A549 (cell line): ENCODE measurements at regions of chr6 and their contacts with region 1.

Region 1: GRCh38 chr6:12289933-12290820 is at the start of gene EDN1:
- DNase-seq: peak; percentile 70 to 93
- ATAC-seq: peak; percentile 60 to 64
- H3K4me3 ChIP-seq: peak within 1 kb of the TSS; percentile 81
- H3K27ac ChIP-seq: peak within 1 kb of the TSS; percentile 89 to 95
- H3K4me1 ChIP-seq: peaks cover 41% of the 10 kb centered on the region
- CTCF ChIP-seq: no peak
- EP300 ChIP-seq: peak in 1 of 2 experiments; percentile 34; a peak in 1 of 5 replicates
- POLR2A ChIP-seq: peak; percentile 96
- RAD21 ChIP-seq: peak; percentile 11 to 39; a peak in 3 of 5 replicates
- polyA plus RNA-seq, gene EDN1: 67.1 and 87.4 TPM in 2 replicates

Region 2: DNA sequence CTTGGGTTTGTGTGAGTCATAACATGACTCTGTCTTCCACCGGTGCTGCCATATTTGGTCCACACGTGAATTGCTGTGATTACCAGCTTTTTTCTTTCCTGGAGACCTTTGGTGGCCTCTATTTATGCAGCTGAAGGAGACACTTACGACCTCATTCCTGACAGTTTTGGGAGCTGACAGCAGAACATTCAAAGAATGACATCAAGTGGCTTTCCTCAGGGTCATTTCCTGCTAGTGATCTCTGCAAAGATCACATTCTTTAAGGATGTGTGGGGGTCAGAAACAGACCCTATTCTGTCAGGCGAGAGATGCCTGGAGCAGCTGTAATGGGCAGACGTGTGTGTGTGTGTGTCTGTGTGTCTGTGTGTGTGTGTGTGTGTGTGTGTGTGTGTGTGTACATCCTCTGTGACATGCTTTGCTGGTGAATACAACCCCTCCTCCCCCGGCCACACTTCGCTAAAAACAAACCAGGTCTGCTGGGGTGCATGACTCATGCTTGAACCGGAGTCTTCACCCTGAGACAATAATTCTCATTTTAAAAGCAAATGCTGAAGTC is 637.1 kb before region 1 on chr6:
- CTCF ChIA-PET with region 1: interaction called, 11 read pairs
- POLR2A ChIA-PET with region 1: interaction called, 5 read pairs
- DNase-seq: peak; percentile 30 to 68
- ATAC-seq: peak; percentile 59 to 64; a peak in 5 of 6 replicates
- H3K4me3 ChIP-seq: no peak overlapping the region
- H3K27ac ChIP-seq: peak overlapping the region; percentile 80 to 89
- H3K4me1 ChIP-seq: peaks cover 51% of the 10 kb centered on the region
- CTCF ChIP-seq: no peak
- EP300 ChIP-seq: no peak
- POLR2A ChIP-seq: no peak
- RAD21 ChIP-seq: no peak

Region 3: DNA sequence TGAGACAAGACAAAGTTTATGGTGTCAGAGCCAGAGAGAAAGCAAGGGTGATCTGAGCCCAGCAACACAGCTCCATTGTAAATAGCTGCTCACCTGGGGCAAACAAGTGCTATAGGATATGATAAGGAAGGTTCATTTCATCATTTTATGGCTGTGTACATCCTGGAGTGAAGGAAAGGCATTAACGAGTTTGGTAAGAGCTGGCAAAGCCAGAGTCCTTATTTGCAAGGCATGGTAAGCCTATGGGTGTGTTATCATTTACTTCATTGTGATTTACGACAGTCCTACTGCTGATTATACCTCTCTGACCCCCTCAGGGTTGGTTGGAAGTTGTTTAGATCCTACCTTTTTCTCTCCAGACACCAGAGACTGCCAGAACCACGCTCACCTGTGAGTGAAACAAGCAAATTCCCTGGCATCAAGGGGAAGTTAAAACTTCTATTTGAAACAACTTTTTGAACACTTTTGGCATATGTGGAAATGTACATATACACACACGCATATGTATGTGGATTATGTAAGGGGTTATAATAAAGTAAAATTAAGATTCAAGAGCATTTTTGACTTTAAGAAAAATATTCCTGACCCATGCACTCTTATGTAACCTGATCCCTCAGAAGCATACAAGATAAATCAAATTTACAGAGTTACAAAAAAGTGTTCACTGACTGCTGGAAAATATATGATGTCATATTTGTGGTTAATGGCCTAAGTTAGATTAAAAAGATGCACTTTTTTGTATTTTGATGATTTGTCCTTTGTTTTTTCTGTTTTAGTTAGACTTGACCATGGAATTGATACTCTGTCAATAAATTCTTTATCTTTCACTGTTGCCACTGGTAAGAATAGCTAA is 40.4 kb before region 1 on chr6:
- CTCF ChIA-PET with region 1: no interaction called
- POLR2A ChIA-PET with region 1: no interaction called
- DNase-seq: no peak
- ATAC-seq: no peak
- H3K4me3 ChIP-seq: no peak overlapping the region
- H3K27ac ChIP-seq: no peak overlapping the region
- H3K4me1 ChIP-seq: peaks cover 27% of the 10 kb centered on the region
- CTCF ChIP-seq: no peak
- EP300 ChIP-seq: no peak
- POLR2A ChIP-seq: no peak
- RAD21 ChIP-seq: no peak

Region 4: DNA sequence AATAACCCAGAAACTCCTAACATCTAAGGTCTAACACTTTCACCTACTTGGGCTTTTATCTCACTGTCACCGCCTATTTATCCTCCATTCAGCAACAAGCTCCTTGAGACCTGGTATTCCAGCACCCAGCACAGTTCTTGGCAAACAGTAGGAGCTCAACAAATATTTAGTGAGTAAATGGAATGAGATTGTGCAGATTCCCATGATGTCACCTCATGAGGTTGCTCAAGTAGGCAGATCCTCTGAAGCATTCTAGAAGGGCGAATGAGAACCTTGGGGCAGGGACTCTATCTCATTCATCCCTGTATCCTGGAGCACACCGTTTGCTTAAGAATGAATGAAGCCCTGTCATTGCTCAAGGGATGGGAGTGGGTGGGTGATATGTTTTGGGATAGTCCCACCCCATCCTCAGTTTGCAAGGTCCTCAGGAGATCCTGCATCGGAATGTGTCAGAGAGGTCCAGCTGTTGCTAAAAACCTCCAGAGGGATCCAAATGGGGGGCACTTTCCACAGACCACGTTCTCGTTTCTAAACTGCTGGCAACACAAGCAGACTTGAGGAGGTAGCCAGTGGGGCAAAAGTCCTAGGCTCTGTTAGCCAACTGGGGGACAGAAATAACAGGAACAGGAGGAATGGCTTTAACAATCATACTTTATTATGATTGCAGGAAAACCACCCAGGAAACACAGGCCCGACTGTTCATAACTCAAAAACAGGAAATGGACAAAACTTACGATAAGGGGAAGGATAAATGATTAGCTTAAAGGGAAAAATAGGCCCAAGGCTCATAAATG is 42.0 kb after region 1 on chr6:
- CTCF ChIA-PET with region 1: interaction called, 10 read pairs
- POLR2A ChIA-PET with region 1: interaction called, 13 read pairs
- DNase-seq: peak; percentile 54 to 99
- ATAC-seq: peak; percentile 93 to 96
- H3K4me3 ChIP-seq: no peak overlapping the region
- H3K27ac ChIP-seq: peak overlapping the region; percentile 95 to 98
- H3K4me1 ChIP-seq: peaks cover 86% of the 10 kb centered on the region
- CTCF ChIP-seq: no peak
- EP300 ChIP-seq: peak; percentile 88 to 93; a peak in 4 of 5 replicates
- POLR2A ChIP-seq: no peak
- RAD21 ChIP-seq: peak; percentile 24 to 31; a peak in 4 of 5 replicates

Region 5: DNA sequence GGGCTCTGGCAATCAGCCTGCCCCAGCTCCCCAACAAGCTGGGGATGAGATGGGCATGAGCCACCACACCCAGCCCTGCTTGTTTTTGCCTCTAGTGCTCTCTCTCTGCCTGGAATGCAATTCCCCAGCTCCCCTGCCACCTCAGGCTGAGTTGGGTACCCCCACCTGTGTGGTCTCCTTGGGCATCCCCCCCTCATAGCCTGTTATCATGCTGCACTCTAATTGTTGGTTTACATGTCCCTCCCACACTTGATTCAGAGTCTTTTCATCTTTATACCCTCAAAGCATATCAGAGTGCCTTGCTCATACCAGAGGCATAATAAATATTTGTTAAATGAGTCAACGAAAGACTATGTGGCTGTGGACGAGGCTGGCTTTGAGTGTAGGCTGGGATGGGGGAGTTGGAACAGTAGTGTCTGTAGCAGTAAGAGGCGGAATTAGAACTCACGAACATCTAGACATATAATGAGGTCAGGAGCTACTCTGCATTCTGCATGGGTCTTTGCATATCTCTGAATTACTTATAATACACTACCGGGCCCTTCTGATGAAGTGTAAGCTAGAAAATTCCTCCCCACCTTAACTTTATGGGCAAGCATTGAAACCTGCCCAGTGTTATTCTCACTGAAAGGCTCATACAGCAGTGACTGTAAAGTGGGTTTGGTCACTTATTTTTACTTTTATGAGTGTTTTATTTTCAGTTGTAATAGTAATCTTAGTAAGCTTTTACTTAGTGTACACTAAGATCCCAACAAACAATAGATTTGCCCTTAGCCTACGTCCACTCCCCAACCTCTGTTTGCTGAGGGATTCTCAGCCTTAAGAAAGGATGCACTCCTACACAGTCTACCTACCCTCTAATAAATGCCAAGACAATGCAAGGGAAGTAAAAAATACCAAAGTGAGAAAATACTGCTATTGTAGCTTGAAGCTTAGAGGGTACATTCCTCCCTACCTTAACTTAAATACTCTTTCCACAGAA is 58.6 kb after region 1 on chr6:
- CTCF ChIA-PET with region 1: interaction called, 11 read pairs
- POLR2A ChIA-PET with region 1: interaction called, 28 read pairs
- DNase-seq: peak; percentile 78 to 98
- ATAC-seq: peak; percentile 94 to 97
- H3K4me3 ChIP-seq: no peak overlapping the region
- H3K27ac ChIP-seq: peak overlapping the region; percentile 85 to 88
- H3K4me1 ChIP-seq: peaks cover 59% of the 10 kb centered on the region
- CTCF ChIP-seq: no peak
- EP300 ChIP-seq: peak; percentile 98 to 99
- POLR2A ChIP-seq: no peak
- RAD21 ChIP-seq: peak; percentile 53 to 82

Region 6: DNA sequence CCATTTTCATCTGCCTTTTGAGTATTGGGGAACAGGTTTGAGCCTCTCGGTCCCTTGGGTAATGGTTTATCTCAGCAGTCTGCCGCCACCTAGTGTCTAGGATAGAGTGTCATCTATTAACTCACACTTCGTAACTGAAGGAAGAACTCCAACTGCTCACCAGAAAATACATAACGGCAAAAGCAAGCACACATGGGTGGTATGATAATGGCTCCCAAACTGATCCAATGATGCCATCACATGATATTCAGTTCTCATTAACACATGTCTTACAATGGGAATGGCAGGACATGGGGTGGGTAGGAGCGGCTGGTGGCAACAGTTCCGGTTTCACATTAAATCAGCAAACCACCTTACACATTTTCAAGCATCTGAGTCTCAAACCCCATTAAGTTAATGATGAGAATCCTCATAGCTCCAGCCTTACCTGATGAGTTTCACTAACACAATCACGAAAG is 315.7 kb after region 1 on chr6:
- CTCF ChIA-PET with region 1: interaction called, 208 read pairs
- POLR2A ChIA-PET with region 1: interaction called, 15 read pairs
- DNase-seq: peak; percentile 23 to 83
- ATAC-seq: peak; percentile 69 to 83; a peak in 5 of 6 replicates
- H3K4me3 ChIP-seq: no peak overlapping the region
- H3K27ac ChIP-seq: peak overlapping the region; percentile 69 to 87; a peak in 4 of 6 replicates
- H3K4me1 ChIP-seq: peaks cover 55% of the 10 kb centered on the region
- CTCF ChIP-seq: peak; percentile 79
- EP300 ChIP-seq: no peak
- POLR2A ChIP-seq: no peak
- RAD21 ChIP-seq: peak; percentile 78 to 85